ENCODE measurements at regions of chr18 and their contacts with region 1.

Region 1: DNA sequence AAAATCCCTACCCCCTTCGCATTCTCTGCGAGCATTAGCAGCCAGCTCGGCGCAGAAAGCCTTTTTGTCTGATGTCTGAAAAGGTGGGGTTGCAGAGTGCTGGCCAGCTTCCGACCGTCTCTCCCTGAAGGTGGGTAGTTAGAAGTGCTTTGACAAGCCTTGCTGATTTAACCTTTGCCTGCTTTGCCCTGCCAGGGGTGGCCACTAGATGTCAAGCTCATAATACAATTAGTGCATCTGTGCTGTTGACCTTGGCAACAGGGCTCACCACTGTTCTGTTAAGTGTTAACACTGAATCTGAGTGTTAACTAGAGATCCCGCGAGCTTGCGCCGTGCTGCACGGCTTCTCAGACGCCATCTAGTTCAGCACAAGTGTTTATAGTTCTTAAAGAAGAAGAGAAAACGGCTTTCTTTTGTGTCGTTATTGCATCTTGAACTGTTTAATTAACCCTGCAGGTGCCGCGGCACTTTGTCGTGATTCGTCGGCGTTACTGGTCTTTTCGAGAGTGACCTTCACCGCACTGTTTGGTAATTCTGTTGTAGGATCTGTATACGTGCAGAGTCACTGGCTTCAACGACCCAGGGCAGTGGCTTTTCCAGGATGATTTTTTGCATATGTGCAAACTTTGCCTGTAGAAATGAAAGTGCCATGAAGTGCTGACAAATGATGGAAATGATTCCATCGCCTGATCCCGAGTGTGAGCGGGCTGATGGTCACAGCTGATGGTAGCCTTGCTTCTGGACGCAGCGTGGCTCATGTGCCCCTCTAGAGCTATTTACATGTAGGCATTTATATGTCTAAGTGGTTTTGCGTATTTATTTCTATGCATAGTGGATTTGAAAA is 5.5 kb downstream of the SALL3 start:
- DNase-seq: no peak
- ATAC-seq: no peak

Region 2: GRCh38 chr18:77899972-77900754 is 1085.0 kb before region 1 on chr18:
- intact Hi-C with region 1: loop called (anchors 10 kb)
- DNase-seq: peak; percentile 66
- ATAC-seq: peak; percentile 79

Region 3: GRCh38 chr18:78073275-78073674 is 911.9 kb before region 1 on chr18:
- intact Hi-C with region 1: loop called (anchors 10 kb)
- DNase-seq: no peak
- ATAC-seq: no peak